ENCODE measurements at regions of chr20 and their contacts with region 1.

Region 1: GRCh38 chr20:12970372-12970821 is 38.4 kb upstream of the SPTLC3 start:
- DNase-seq: peak; percentile 32
- H3K4me3 ChIP-seq: no peak overlapping the region
- H3K27ac ChIP-seq: no peak overlapping the region
- H3K4me1 ChIP-seq: peaks cover 14% of the 10 kb centered on the region
- H3K27me3 ChIP-seq: no peaks in the 10 kb centered on the region
- CTCF ChIP-seq: peak; percentile 61 to 63

Region 2: DNA sequence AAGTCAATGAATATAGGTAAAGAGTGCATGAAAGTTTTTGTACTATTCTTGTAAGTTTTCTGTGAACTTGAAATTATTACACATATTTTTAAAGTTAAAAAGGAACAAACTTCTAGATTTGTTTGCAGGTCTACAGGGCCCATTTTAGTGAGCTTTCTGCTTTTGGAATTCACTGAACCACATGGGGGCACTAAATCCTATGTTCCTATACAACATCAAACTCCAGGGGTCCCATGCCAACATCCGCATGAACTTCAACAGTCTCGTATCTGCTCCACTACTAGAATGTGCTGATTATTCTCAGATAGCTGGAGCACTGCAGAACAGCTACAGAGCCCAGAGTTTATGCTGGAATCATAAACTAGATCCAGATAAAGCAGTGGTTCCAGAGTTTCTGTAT is 309.5 kb before region 1 on chr20:
- CTCF ChIA-PET with region 1: no interaction called
- dilution Hi-C with region 1: no loop called
- in situ Hi-C with region 1: no loop called
- intact Hi-C with region 1: loop called (anchors 5 kb)
- DNase-seq: peak; percentile 6
- H3K4me3 ChIP-seq: no peak overlapping the region
- H3K27ac ChIP-seq: no peak overlapping the region
- H3K4me1 ChIP-seq: no peaks in the 10 kb centered on the region
- H3K27me3 ChIP-seq: no peaks in the 10 kb centered on the region
- CTCF ChIP-seq: peak; percentile 22 to 51

Region 3: DNA sequence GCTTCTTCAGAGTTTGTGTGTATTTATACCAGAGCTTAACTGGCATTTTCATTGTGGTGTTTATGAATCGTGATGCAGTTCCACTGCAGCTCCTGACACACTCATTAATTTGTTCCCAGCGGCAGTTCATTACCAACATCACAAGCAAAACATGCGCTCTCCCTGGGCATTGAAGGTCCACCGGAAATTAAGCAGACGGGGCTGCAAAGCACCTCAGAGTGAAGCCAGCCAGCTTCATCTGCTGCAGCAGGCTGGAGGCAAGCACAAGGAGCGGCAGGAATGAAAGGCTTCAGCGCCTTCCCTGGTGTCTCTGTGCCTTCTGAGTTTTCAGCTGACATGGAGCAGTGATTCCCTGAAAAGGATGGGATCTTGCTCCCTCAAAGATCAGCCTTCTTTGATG is 207.7 kb before region 1 on chr20:
- CTCF ChIA-PET with region 1: no interaction called
- dilution Hi-C with region 1: no loop called
- in situ Hi-C with region 1: no loop called
- intact Hi-C with region 1: no loop called
- DNase-seq: peak; percentile 14
- H3K4me3 ChIP-seq: no peak overlapping the region
- H3K27ac ChIP-seq: no peak overlapping the region
- H3K4me1 ChIP-seq: no peaks in the 10 kb centered on the region
- H3K27me3 ChIP-seq: peaks cover 4% of the 10 kb centered on the region
- CTCF ChIP-seq: no peak

Region 4: DNA sequence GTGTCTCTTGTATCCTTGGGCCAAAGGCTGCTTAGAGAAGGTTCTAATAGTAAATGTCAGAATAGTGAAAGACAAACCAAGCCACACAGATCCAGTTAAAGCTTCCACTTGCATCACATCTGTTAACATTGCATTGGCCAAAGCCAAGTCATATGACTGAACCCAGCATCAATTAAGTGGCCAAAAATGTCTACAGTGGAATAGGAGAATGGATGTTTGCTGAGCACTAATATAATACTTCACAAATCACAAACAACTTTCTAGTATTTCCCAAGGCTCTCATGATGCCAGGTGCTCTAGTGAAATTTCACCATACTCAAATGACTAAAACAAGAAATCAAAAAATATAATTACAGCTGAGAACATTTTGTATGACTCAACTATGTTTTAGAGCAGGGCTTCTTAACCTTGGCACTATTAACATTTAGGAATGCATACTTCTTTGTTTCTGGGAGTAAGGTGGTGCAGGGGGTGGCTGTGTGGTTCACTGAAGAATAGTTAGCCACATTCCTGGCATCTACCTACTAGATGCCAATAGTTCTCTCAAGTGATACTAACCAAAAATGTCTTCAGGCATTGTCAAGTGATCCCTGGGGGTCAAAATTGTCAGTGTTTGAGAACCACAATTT is 109.7 kb before region 1 on chr20:
- CTCF ChIA-PET with region 1: no interaction called
- dilution Hi-C with region 1: no loop called
- in situ Hi-C with region 1: no loop called
- intact Hi-C with region 1: no loop called
- DNase-seq: peak; percentile 40
- H3K4me3 ChIP-seq: no peak overlapping the region
- H3K27ac ChIP-seq: no peak overlapping the region
- H3K4me1 ChIP-seq: peaks cover 4% of the 10 kb centered on the region
- H3K27me3 ChIP-seq: no peaks in the 10 kb centered on the region
- CTCF ChIP-seq: no peak

Region 5: DNA sequence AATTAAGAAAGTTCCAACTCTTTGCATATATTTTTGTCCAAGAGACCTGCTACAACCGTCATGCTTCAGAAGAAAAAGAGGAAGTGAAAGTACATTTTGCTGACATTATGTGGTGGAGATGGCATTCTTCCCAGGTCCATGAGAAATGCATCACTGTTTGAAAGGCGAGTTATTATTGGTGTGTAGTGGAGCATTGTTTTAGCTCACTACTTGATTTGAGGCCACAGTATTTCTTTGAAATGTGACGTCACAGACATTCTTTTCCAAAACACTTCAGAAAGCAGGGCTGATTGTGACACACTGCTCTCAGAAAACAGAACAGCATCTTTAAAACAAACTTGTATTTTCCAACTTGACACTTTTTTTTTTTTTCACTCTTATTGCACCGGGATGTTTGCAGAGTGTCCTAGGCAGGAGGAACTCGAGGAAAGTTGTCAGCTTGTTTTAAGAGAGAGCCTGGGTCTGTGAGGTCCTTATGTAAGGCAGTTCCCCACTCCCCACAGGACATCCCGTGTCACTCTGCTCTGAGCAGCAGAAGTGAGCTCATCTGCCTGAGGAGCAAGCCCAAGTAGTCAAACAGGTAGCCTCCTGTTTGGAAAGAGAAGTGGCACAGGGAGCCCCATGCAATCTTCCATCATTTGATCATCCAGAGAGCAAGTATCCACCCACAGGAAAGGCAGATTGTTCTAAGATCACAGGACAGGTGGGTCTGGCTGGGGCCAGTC is 39.4 kb after region 1 on chr20:
- CTCF ChIA-PET with region 1: no interaction called
- dilution Hi-C with region 1: no loop called
- in situ Hi-C with region 1: no loop called
- intact Hi-C with region 1: loop called (anchors 1 kb)
- DNase-seq: peak; percentile 85
- H3K4me3 ChIP-seq: peak overlapping the region; percentile 47 to 70 (median 53)
- H3K27ac ChIP-seq: peak overlapping the region; percentile 85
- H3K4me1 ChIP-seq: peaks cover 33% of the 10 kb centered on the region
- H3K27me3 ChIP-seq: no peaks in the 10 kb centered on the region
- CTCF ChIP-seq: no peak

Region 6: DNA sequence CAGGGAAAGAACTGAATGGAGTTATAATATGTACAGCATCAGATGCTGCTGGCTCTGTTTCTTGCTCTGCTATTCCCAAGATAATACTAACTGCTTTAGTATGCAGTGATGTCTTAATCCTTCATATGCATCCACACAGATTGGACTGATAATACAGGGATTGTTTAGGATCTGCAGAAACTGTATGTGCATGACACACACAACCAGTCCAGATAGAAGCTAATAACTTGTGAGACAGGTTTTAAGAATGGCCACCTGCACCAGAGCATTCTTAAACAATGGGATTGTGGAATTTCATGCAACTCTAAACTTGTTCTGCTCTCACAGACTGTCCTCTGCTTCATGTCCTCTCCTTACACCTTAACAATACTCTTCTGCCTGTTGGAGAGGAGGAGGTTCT is 129.3 kb after region 1 on chr20:
- CTCF ChIA-PET with region 1: no interaction called
- dilution Hi-C with region 1: no loop called
- in situ Hi-C with region 1: loop called (anchors 5 kb)
- intact Hi-C with region 1: no loop called
- DNase-seq: peak; percentile 87
- H3K4me3 ChIP-seq: no peak overlapping the region
- H3K27ac ChIP-seq: peak overlapping the region; percentile 50
- H3K4me1 ChIP-seq: peaks cover 27% of the 10 kb centered on the region
- H3K27me3 ChIP-seq: no peaks in the 10 kb centered on the region
- CTCF ChIP-seq: no peak

Region 7: DNA sequence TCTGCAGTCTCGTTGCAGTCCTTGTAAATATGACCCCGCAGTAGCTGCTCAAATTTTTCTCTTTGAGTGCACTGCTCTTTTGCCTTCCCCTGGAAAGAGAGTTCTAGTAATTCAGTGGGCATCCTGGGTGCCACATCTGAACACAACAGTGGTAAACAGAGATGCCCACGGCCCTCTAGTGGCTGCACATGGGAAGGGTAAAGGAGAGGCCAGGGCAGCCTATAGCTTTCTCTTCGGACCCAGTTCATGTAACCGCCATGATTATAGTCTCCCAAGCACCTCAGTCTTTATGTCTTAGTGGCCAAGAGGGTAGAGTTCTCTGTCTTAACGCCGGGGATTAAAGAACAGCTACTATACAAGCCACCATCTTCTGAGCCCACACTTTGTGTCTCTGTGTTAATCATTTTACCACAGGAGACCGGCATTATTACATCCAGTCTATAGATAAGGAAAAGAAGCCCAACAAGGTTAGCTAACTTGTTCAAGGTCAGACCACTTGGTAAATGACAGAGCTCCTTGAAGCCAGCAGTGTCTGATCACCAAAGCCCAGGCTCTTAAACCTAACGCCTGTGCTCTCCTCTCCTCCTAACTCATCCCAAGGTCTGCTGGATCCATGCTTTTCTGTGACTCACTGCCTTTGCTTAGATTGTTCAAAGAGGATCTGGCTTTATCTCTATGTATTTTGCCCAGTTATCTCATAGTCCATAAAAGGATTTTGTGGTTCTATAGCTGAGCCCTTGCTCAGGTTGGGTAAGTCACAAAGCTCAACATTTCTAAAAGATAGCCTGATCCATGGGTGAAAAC is 332.5 kb after region 1 on chr20:
- CTCF ChIA-PET with region 1: no interaction called
- dilution Hi-C with region 1: loop called (anchors 25 kb)
- in situ Hi-C with region 1: no loop called
- intact Hi-C with region 1: loop called (anchors 5 kb)
- DNase-seq: peak; percentile 30
- H3K4me3 ChIP-seq: no peak overlapping the region
- H3K27ac ChIP-seq: no peak overlapping the region
- H3K4me1 ChIP-seq: peaks cover 14% of the 10 kb centered on the region
- H3K27me3 ChIP-seq: no peaks in the 10 kb centered on the region
- CTCF ChIP-seq: peak; percentile 84

Region 8: DNA sequence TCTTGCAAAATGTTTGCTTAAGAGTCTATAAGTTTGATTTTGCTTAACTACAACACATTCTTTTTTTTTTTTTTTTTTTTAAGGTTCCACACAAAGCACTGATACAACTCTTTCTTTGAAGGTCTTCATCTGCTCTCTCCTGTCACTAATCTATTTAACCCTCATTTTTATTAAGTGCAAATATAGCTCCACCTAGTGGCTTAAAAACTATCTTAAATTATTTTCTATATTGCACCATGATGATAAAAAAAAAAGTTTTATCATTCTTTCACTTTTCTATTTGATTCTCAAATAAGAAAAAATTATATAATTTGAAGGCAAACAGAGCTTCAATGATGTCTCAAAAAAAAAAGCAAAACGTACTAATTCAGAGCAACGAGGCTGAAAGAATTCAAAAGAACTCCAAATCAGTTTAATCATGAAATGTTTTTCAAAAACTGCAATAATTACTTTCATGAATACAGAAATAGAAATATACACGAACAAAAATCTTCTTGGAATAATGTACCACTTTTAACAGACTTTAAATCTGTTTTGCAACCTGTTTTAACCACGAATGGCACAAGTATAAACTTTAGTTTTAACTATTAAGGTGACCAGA is 801.6 kb after region 1 on chr20:
- CTCF ChIA-PET with region 1: no interaction called
- dilution Hi-C with region 1: no loop called
- in situ Hi-C with region 1: no loop called
- intact Hi-C with region 1: loop called (anchors 5 kb)
- DNase-seq: no peak
- H3K4me3 ChIP-seq: no peak overlapping the region
- H3K27ac ChIP-seq: no peak overlapping the region
- H3K4me1 ChIP-seq: no peaks in the 10 kb centered on the region
- H3K27me3 ChIP-seq: no peaks in the 10 kb centered on the region
- CTCF ChIP-seq: peak; percentile 46 to 49

Region 9: DNA sequence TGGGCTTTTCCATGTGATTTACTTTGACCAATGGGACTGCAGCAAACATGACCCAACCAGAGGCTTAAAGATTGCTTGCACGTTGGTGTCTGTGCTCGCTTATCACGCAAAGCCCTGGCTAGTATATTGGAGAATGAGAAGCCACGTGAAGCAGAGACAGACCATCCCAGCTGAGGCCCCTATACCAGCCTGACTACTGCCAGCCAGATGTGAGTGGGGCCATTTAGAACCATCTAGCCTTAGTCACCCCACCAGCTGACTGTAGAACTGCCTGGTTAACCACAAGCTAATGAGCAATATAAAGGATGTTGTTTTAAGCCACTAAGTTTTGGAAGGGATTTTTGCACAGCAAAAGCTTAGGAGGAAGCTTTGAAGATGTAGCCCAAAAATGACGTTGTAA is 1099.4 kb after region 1 on chr20:
- CTCF ChIA-PET with region 1: no interaction called
- dilution Hi-C with region 1: no loop called
- in situ Hi-C with region 1: no loop called
- intact Hi-C with region 1: no loop called
- DNase-seq: peak; percentile 84
- H3K4me3 ChIP-seq: no peak overlapping the region
- H3K27ac ChIP-seq: no peak overlapping the region
- H3K4me1 ChIP-seq: peaks cover 10% of the 10 kb centered on the region
- H3K27me3 ChIP-seq: no peaks in the 10 kb centered on the region
- CTCF ChIP-seq: no peak